H1 (cell line): ENCODE measurements at regions of chr18 and their contacts with region 1.

Region 1: GRCh38 chr18:54558609-54559585 is 32.1 kb upstream of the DYNAP start:
- DNase-seq: no peak
- H3K4me3 ChIP-seq: no peak overlapping the region
- H3K27ac ChIP-seq: no peak overlapping the region
- H3K4me1 ChIP-seq: peaks cover 0 to 3% (median 1%) of the 10 kb centered on the region in 4 experiments; a peak in 5 of 7 replicates
- H3K27me3 ChIP-seq: no peaks in the 10 kb centered on the region
- CTCF ChIP-seq: peak in 2 of 3 experiments; percentile 36 to 49; a peak in 2 of 4 replicates
- EP300 ChIP-seq: no peak
- POLR2A ChIP-seq: no peak
- RAD21 ChIP-seq: peak; percentile 59 to 61

Region 2: DNA sequence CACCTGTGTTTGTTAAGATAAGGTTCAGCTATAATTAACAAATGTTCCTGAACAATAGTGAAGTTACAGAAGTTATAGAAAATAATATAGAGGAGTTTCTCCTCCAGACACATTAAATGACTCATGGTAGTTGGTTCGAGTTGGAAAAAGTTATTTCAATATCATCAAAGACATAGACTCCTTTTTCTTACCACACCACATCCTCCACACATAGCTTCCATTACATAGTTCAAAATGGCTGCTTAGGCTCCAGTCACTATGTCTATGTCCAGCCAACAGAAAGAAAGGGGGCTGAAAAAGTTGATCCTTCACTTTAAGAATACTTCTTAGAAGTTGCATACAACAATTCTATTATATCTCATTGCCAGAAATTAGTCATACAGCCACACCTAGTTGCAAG is 82.8 kb after region 1 on chr18:
- CTCF ChIA-PET with region 1: interaction called, 12 read pairs
- POLR2A ChIA-PET with region 1: no interaction called
- DNase-seq: no peak
- H3K4me3 ChIP-seq: no peak overlapping the region
- H3K27ac ChIP-seq: no peak overlapping the region
- H3K4me1 ChIP-seq: no peaks in the 10 kb centered on the region
- H3K27me3 ChIP-seq: no peaks in the 10 kb centered on the region
- CTCF ChIP-seq: no peak
- EP300 ChIP-seq: no peak
- POLR2A ChIP-seq: no peak
- RAD21 ChIP-seq: no peak